ENCODE measurements at regions of chr4 and their contacts with region 1.

Region 1: DNA sequence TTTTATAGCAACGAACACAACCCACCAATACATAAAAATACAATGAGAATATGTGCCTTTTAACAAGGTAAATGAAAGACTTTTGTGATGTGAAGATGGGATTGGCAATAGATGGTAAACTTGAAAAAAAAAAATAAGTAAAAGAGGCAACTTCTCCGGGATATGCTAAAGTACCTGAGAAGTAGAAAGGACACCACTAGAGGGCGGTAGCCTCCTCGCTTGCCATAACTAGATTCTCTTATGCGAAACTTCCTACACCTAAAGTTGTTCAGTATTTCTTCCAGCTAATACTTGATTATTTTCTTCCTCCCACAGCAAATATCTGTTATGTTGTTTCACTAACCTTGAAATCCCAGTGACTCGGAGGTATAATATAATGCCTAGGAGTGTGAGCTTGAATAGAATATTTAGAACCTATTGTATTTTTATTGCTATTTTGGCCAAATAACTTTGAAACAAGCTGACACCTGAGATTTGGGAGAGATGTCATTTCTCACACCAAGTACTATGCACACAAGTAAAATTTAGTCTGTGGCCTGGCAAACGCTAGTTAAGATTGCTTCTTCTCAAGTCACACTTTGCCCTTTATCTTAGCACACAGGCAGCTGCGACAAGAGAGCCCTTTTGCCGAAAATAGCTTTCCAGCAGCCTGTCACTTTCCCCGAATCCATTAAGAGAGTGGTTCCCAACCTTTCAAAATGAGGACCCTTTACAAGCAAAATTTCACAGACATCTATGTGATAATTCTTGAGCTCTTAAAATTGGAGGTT is 44.9 kb upstream of the PDLIM5 start:
- DNase-seq: peak; percentile 50 to 59 (median 56)
- H3K4me3 ChIP-seq: no peak overlapping the region
- H3K4me3 Mint-ChIP-seq: no peak overlapping the region
- H3K27ac ChIP-seq: no peak overlapping the region
- H3K27ac Mint-ChIP-seq: no peak overlapping the region
- H3K4me1 ChIP-seq: no peaks in the 10 kb centered on the region
- H3K4me1 Mint-ChIP-seq: peaks cover 0 to 4% (median 2%) of the 10 kb centered on the region in 4 donors
- H3K27me3 ChIP-seq: no peaks in the 10 kb centered on the region
- H3K27me3 Mint-ChIP-seq: peaks cover 4 to 5% of the 10 kb centered on the region in 2 donors

Region 2: DNA sequence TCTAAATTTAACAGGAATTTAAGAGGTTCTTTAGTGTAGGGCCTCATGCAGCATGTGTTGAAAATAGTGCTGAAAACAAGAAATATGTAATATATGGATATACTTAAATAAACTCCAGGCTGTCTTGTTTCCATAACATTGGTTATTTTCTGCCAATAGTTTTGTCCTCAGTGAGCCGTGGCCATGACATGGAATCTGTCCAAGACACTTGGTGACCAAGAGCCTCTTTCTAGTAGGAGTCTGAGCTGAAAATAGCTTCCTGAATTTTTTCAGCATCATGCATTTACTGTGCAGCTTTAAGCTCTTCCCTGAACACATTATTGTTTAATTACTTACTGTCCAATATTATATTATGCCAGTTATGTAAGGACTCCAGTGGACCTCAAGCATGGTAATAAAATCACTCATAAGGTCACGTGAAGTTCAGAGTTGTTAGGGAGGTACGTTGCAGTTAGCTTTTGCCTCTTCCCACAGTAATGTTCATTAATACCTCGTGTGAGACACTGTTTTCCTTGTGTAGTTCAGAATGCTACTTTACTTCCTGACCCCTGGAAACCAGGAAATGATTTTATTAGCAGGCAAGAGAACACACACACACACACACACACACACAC is 1614.9 kb before region 1 on chr4:
- CTCF ChIA-PET with region 1: no interaction called
- POLR2A ChIA-PET with region 1: no interaction called
- intact Hi-C with region 1: no loop called
- DNase-seq: no peak
- H3K4me3 ChIP-seq: no peak overlapping the region
- H3K4me3 Mint-ChIP-seq: no peak overlapping the region
- H3K27ac ChIP-seq: no peak overlapping the region
- H3K27ac Mint-ChIP-seq: no peak overlapping the region
- H3K4me1 ChIP-seq: no peaks in the 10 kb centered on the region
- H3K4me1 Mint-ChIP-seq: no peaks in the 10 kb centered on the region
- H3K27me3 ChIP-seq: no peaks in the 10 kb centered on the region
- H3K27me3 Mint-ChIP-seq: no peaks in the 10 kb centered on the region

Region 3: GRCh38 chr4:94304365-94304971 is 102.4 kb before region 1 on chr4:
- CTCF ChIA-PET with region 1: interaction called, 9 read pairs
- POLR2A ChIA-PET with region 1: no interaction called
- intact Hi-C with region 1: loop called (anchors 5 kb)
- DNase-seq: peak in 4 of 5 donors; percentile 5 to 22 (median 16)
- H3K4me3 ChIP-seq: no peak overlapping the region
- H3K4me3 Mint-ChIP-seq: no peak overlapping the region
- H3K27ac ChIP-seq: no peak overlapping the region
- H3K27ac Mint-ChIP-seq: no peak overlapping the region
- H3K4me1 ChIP-seq: no peaks in the 10 kb centered on the region
- H3K4me1 Mint-ChIP-seq: no peaks in the 10 kb centered on the region
- H3K27me3 ChIP-seq: no peaks in the 10 kb centered on the region
- H3K27me3 Mint-ChIP-seq: no peaks in the 10 kb centered on the region

Region 4: DNA sequence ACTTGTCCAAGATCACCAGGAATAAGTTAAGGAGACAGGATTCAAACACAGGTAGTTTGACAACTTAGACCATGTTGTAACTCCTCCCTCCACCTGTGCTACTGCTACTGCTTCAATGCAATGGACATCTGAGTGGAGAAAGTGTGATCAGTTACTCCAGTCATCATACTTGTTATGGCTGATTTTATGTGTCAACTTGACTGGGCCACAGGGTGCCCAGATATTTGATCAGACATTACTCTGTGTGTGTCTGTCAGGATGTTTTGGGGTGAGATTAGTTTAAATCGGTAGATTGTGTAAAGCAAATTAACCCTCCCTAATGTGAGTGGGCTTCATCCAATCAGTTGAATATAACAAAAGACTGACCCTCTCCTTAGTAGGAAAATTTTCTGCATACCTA is 10.1 kb after region 1 on chr4:
- CTCF ChIA-PET with region 1: interaction called, 11 read pairs
- POLR2A ChIA-PET with region 1: no interaction called
- intact Hi-C with region 1: no loop called
- DNase-seq: no peak
- H3K4me3 ChIP-seq: no peak overlapping the region
- H3K4me3 Mint-ChIP-seq: no peak overlapping the region
- H3K27ac ChIP-seq: no peak overlapping the region
- H3K27ac Mint-ChIP-seq: no peak overlapping the region
- H3K4me1 ChIP-seq: no peaks in the 10 kb centered on the region
- H3K4me1 Mint-ChIP-seq: no peaks in the 10 kb centered on the region
- H3K27me3 ChIP-seq: no peaks in the 10 kb centered on the region
- H3K27me3 Mint-ChIP-seq: peaks cover 20 to 23% of the 10 kb centered on the region in 2 donors

Region 5: GRCh38 chr4:94451695-94452475 is 45.0 kb after region 1 on chr4 and contains the start of gene PDLIM5:
- CTCF ChIA-PET with region 1: interaction called, 13 read pairs
- POLR2A ChIA-PET with region 1: no interaction called
- intact Hi-C with region 1: loop called (anchors 5 kb)
- DNase-seq: peak; percentile 85 to 91 (median 88)
- H3K4me3 ChIP-seq: peak within 1 kb of the TSS; percentile 66 to 86
- H3K4me3 Mint-ChIP-seq: peak within 1 kb of the TSS; percentile 85 to 93 (median 90)
- H3K27ac ChIP-seq: peak within 1 kb of the TSS; percentile 66
- H3K27ac Mint-ChIP-seq: peak within 1 kb of the TSS; percentile 70 to 92 (median 84)
- H3K4me1 ChIP-seq: peaks cover 17% of the 10 kb centered on the region
- H3K4me1 Mint-ChIP-seq: peaks cover 18 to 34% (median 21%) of the 10 kb centered on the region in 4 donors
- H3K27me3 ChIP-seq: peaks cover 4% of the 10 kb centered on the region
- H3K27me3 Mint-ChIP-seq: peaks cover 7 to 10% of the 10 kb centered on the region in 2 donors
- total RNA-seq, gene PDLIM5: 37.4 to 38.9 TPM

Region 6: GRCh38 chr4:94595879-94596483 is 189.1 kb after region 1 on chr4:
- CTCF ChIA-PET with region 1: interaction called, 27 read pairs
- POLR2A ChIA-PET with region 1: no interaction called
- intact Hi-C with region 1: loop called (anchors 1 kb)
- DNase-seq: peak in 4 of 5 donors; percentile 17 to 36 (median 30)
- H3K4me3 ChIP-seq: no peak overlapping the region
- H3K4me3 Mint-ChIP-seq: no peak overlapping the region
- H3K27ac ChIP-seq: no peak overlapping the region
- H3K27ac Mint-ChIP-seq: no peak overlapping the region
- H3K4me1 ChIP-seq: no peaks in the 10 kb centered on the region
- H3K4me1 Mint-ChIP-seq: no peaks in the 10 kb centered on the region
- H3K27me3 ChIP-seq: no peaks in the 10 kb centered on the region
- H3K27me3 Mint-ChIP-seq: no peaks in the 10 kb centered on the region

Region 7: DNA sequence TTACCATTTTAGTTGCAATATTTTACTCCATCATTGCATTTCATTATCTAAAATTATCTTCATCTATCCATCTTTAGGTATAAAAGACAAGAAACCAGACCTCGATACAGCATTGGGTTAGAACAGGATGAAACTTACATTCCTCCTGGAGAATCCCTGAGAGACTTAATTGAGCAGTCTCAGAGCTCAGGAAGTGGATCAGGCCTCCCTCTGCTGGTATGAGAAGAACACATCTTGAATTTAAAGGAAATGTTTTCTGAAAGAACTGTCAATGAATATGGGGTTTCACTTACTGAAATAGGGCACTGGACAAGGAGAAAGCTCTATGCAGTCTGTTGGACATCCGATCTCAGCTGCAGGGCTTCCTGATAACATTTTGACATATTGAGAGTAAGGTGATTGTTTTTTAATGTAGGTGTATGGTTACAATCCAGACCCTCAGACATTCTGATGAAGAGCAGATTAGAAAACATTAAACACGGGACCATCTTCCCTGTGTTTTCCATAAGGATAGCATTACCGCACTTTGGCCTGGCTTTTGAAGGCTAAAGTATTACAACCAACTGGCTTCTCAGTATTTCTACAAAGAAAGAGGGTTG is 718.2 kb after region 1 on chr4:
- CTCF ChIA-PET with region 1: no interaction called
- POLR2A ChIA-PET with region 1: no interaction called
- intact Hi-C with region 1: loop called (anchors 10 kb)
- DNase-seq: no peak
- H3K4me3 ChIP-seq: no peak overlapping the region
- H3K4me3 Mint-ChIP-seq: no peak overlapping the region
- H3K27ac ChIP-seq: no peak overlapping the region
- H3K27ac Mint-ChIP-seq: no peak overlapping the region
- H3K4me1 ChIP-seq: no peaks in the 10 kb centered on the region
- H3K4me1 Mint-ChIP-seq: peaks cover 0 to 2% (median 0%) of the 10 kb centered on the region in 4 donors
- H3K27me3 ChIP-seq: no peaks in the 10 kb centered on the region
- H3K27me3 Mint-ChIP-seq: peaks cover 0 to 2% of the 10 kb centered on the region in 2 donors

Measured in CD4-positive, alpha-beta memory T cell (primary cell).